Heart left ventricle (tissue), 16 donors: ENCODE measurements at regions of chr9 and their contacts with region 1.

Region 1: DNA sequence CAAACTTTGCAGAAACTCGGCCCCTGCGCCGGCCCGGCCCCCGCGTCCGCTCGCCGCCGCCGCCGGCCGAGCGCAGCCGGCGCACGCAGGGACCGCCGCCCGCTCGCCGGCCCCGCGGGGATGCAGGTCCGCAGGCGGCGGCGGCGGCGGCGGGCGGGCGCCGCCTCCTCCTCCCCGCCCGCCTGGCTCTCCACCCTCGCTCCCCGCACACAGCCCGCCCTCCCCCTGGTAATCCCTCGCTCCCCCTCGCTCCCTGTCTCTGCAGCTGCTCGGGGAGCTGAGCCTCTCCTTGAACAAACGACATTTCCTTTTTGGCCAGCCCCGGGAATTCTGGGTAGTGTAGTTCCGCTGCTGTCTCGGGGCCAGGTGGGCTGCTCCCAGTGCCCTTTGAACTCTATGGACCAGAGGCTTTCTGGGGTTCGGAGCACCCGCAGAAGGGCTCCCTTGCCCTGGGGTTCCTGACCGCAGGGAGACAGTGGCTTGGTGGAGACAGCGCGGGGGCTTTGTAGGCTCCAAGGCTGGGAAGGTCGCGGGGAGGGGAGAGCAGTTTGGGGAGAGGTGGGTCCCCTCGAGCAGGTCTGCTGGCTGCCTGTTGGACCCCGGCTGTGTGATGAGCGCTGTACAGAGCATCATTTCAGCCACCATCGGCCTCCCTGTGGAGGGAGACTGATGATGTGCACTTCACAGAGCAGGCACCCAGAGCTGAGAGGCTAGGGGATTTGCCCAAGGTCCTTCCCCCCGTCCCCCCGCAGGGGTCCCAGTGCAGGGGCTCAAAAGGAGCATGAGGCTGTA is 1.8 kb upstream of the FAM78A start:
- DNase-seq: peak; percentile 91 to 94 (median 92)
- ATAC-seq: peak; percentile 44 to 65 (median 58)
- H3K4me3 ChIP-seq: peak overlapping the region; percentile 69 to 96 (median 84)
- H3K27ac ChIP-seq: peak overlapping the region; percentile 88 to 99 (median 98)
- H3K4me1 ChIP-seq: peaks cover 4 to 63% (median 31%) of the 10 kb centered on the region in 12 donors
- H3K27me3 ChIP-seq: peaks cover 0 to 16% (median 0%) of the 10 kb centered on the region in 9 donors
- CTCF ChIP-seq: no peak
- POLR2A ChIP-seq: no peak

Region 2: GRCh38 chr9:131178382-131178781 is 99.7 kb before region 1 on chr9:
- intact Hi-C with region 1: loop called in 7 of 10 experiments (anchors 2 to 10 kb)
- DNase-seq: peak; percentile 64 to 83 (median 69)
- ATAC-seq: peak; percentile 82 to 96 (median 94)
- H3K4me3 ChIP-seq: no peak overlapping the region
- H3K27ac ChIP-seq: peak overlapping the region in 1 of 12 donors; percentile 31
- H3K4me1 ChIP-seq: peaks cover 0 to 29% (median 6%) of the 10 kb centered on the region in 12 donors
- H3K27me3 ChIP-seq: no peaks in the 10 kb centered on the region
- CTCF ChIP-seq: peak; percentile 87 to 96 (median 93)
- POLR2A ChIP-seq: no peak

Region 3: GRCh38 chr9:131237931-131238401 is 40.1 kb before region 1 on chr9:
- intact Hi-C with region 1: loop called in 5 of 10 experiments (anchors 2 to 5 kb)
- DNase-seq: peak; percentile 69 to 87 (median 82)
- ATAC-seq: peak; percentile 36 to 65 (median 64)
- H3K4me3 ChIP-seq: peak overlapping the region in 5 of 12 donors; percentile 1 to 35 (median 19)
- H3K27ac ChIP-seq: peak overlapping the region; percentile 62 to 96 (median 85)
- H3K4me1 ChIP-seq: peaks cover 0 to 58% (median 39%) of the 10 kb centered on the region in 12 donors
- H3K27me3 ChIP-seq: no peaks in the 10 kb centered on the region
- CTCF ChIP-seq: no peak
- POLR2A ChIP-seq: no peak

Region 4: GRCh38 chr9:131310833-131311554 is 32.9 kb after region 1 on chr9:
- intact Hi-C with region 1: loop called in 1 of 10 experiments (anchors 5 kb)
- DNase-seq: peak in 1 of 5 donors; percentile 68
- ATAC-seq: peak; percentile 60 to 67 (median 64)
- H3K4me3 ChIP-seq: peak overlapping the region in 2 of 12 donors; percentile 8 to 21
- H3K27ac ChIP-seq: peak overlapping the region in 11 of 12 donors; percentile 3 to 86 (median 33)
- H3K4me1 ChIP-seq: peaks cover 0 to 31% (median 12%) of the 10 kb centered on the region in 12 donors
- H3K27me3 ChIP-seq: no peaks in the 10 kb centered on the region
- CTCF ChIP-seq: peak in 1 of 12 donors; percentile 13
- POLR2A ChIP-seq: no peak

Region 5: GRCh38 chr9:131478421-131478868 is 200.3 kb after region 1 on chr9:
- intact Hi-C with region 1: no loop called
- DNase-seq: peak in 2 of 5 donors; percentile 53 to 77
- ATAC-seq: no peak
- H3K4me3 ChIP-seq: no peak overlapping the region
- H3K27ac ChIP-seq: peak overlapping the region in 3 of 12 donors; percentile 3 to 72 (median 18)
- H3K4me1 ChIP-seq: peaks cover 0 to 52% (median 20%) of the 10 kb centered on the region in 12 donors
- H3K27me3 ChIP-seq: no peaks in the 10 kb centered on the region
- CTCF ChIP-seq: peak; percentile 36 to 66 (median 57)
- POLR2A ChIP-seq: no peak

Region 6: GRCh38 chr9:131578731-131579504 is 300.8 kb after region 1 on chr9:
- intact Hi-C with region 1: no loop called
- DNase-seq: peak in 1 of 5 donors; percentile 18
- ATAC-seq: no peak
- H3K4me3 ChIP-seq: no peak overlapping the region
- H3K27ac ChIP-seq: peak overlapping the region in 1 of 12 donors; percentile 55
- H3K4me1 ChIP-seq: peaks cover 0 to 22% (median 8%) of the 10 kb centered on the region in 12 donors
- H3K27me3 ChIP-seq: no peaks in the 10 kb centered on the region
- CTCF ChIP-seq: no peak
- POLR2A ChIP-seq: no peak